B cell (primary cell): ENCODE measurements at regions of chr4 and their contacts with region 1.

Region 1: GRCh38 chr4:26325191-26325590 is 4.4 kb downstream of the RBPJ start:
- DNase-seq: peak; percentile 47
- ATAC-seq: no peak
- H3K4me3 ChIP-seq: no peak overlapping the region
- H3K4me3 Mint-ChIP-seq: no peak overlapping the region
- H3K27ac ChIP-seq: no peak overlapping the region
- H3K27ac Mint-ChIP-seq: no peak overlapping the region
- H3K4me1 ChIP-seq: peaks cover 13 to 14% of the 10 kb centered on the region in 2 donors
- H3K4me1 Mint-ChIP-seq: peaks cover 33% of the 10 kb centered on the region
- H3K27me3 ChIP-seq: no peaks in the 10 kb centered on the region
- H3K27me3 Mint-ChIP-seq: no peaks in the 10 kb centered on the region
- CTCF ChIP-seq: peak; percentile 24

Region 2: DNA sequence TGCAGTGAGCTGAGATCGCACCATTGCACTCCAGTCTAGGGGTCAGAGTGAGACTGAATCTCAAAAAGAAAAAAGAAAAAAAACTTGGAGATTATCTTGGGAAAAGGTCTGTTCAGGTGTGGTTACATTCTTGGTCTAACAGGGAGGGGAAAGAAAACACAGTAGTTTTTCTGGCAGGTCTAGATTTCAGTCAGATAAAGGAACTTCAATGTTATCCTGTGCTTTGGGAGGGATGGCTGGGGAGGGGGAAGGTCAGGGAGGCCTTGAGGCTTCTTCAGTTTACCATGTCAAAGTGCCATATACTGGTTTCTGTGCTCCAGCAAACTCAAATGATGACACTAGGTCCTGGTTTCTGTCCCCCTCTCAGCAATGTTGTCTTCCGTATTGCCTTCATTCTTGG is 718.5 kb before region 1 on chr4:
- CTCF ChIA-PET with region 1: no interaction called
- POLR2A ChIA-PET with region 1: no interaction called
- intact Hi-C with region 1: no loop called
- DNase-seq: no peak
- ATAC-seq: no peak
- H3K4me3 ChIP-seq: no peak overlapping the region
- H3K4me3 Mint-ChIP-seq: no peak overlapping the region
- H3K27ac ChIP-seq: no peak overlapping the region
- H3K27ac Mint-ChIP-seq: no peak overlapping the region
- H3K4me1 ChIP-seq: no peaks in the 10 kb centered on the region
- H3K4me1 Mint-ChIP-seq: no peaks in the 10 kb centered on the region
- H3K27me3 ChIP-seq: no peaks in the 10 kb centered on the region
- H3K27me3 Mint-ChIP-seq: peaks cover 4% of the 10 kb centered on the region
- CTCF ChIP-seq: no peak

Region 3: GRCh38 chr4:25993395-25994185 is 331.6 kb before region 1 on chr4:
- CTCF ChIA-PET with region 1: interaction called, 18 read pairs
- POLR2A ChIA-PET with region 1: no interaction called
- intact Hi-C with region 1: loop called (anchors 2 kb)
- DNase-seq: peak; percentile 33
- ATAC-seq: peak; percentile 39
- H3K4me3 ChIP-seq: no peak overlapping the region
- H3K4me3 Mint-ChIP-seq: no peak overlapping the region
- H3K27ac ChIP-seq: no peak overlapping the region
- H3K27ac Mint-ChIP-seq: no peak overlapping the region
- H3K4me1 ChIP-seq: peaks cover 0 to 5% of the 10 kb centered on the region in 2 donors
- H3K4me1 Mint-ChIP-seq: peaks cover 8% of the 10 kb centered on the region
- H3K27me3 ChIP-seq: peaks cover 0 to 2% (median 0%) of the 10 kb centered on the region in 4 experiments
- H3K27me3 Mint-ChIP-seq: peaks cover 5% of the 10 kb centered on the region
- CTCF ChIP-seq: peak; percentile 31

Region 4: GRCh38 chr4:26028793-26029567 is 296.2 kb before region 1 on chr4:
- CTCF ChIA-PET with region 1: interaction called, 13 read pairs
- POLR2A ChIA-PET with region 1: no interaction called
- intact Hi-C with region 1: loop called (anchors 1 kb)
- DNase-seq: peak; percentile 64
- ATAC-seq: peak; percentile 87
- H3K4me3 ChIP-seq: no peak overlapping the region
- H3K4me3 Mint-ChIP-seq: no peak overlapping the region
- H3K27ac ChIP-seq: no peak overlapping the region
- H3K27ac Mint-ChIP-seq: no peak overlapping the region
- H3K4me1 ChIP-seq: peaks cover 5 to 8% of the 10 kb centered on the region in 2 donors
- H3K4me1 Mint-ChIP-seq: peaks cover 6% of the 10 kb centered on the region
- H3K27me3 ChIP-seq: peaks cover 0 to 17% (median 3%) of the 10 kb centered on the region in 4 experiments
- H3K27me3 Mint-ChIP-seq: peaks cover 18% of the 10 kb centered on the region
- CTCF ChIP-seq: peak; percentile 69

Region 5: DNA sequence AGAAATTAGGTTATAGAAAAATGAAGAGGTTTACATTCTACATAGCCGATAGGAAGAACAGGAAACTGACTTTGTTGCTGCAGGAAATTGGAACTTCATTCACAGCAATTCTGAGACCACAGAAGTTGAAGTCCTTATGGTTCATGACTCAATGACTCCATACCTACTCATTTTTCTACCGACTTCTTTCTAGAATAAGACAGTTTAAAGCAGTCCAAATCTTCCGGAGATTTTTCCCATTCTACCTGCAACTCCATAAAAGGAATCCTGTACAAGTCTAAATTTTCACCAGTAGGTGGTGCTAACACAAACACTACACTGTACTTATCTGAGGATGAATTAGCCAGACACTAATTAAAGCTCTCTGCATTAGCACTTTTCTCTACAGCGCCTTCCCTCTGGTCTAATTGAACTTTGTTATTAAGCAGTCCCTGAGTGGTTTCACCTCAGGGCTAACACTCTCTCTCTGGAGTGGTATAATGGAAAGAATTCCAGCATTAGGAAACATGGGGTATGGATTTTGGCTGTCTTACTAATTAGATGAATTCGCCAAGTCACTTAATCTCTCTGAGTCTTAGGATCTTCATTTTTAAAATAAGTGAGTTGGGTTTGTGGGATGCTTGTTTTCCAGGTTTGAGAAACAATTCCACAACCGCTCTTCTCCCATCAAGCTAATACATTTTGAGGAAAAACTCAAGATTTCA is 243.2 kb before region 1 on chr4:
- CTCF ChIA-PET with region 1: interaction called, 22 read pairs
- POLR2A ChIA-PET with region 1: no interaction called
- intact Hi-C with region 1: loop called (anchors 1 kb)
- DNase-seq: peak; percentile 56
- ATAC-seq: peak; percentile 41
- H3K4me3 ChIP-seq: no peak overlapping the region
- H3K4me3 Mint-ChIP-seq: no peak overlapping the region
- H3K27ac ChIP-seq: no peak overlapping the region
- H3K27ac Mint-ChIP-seq: no peak overlapping the region
- H3K4me1 ChIP-seq: no peaks in the 10 kb centered on the region
- H3K4me1 Mint-ChIP-seq: peaks cover 8% of the 10 kb centered on the region
- H3K27me3 ChIP-seq: peaks cover 0 to 10% (median 0%) of the 10 kb centered on the region in 4 experiments
- H3K27me3 Mint-ChIP-seq: peaks cover 5% of the 10 kb centered on the region
- CTCF ChIP-seq: peak; percentile 78

Region 6: GRCh38 chr4:26369581-26369980 is 44.4 kb after region 1 on chr4:
- CTCF ChIA-PET with region 1: no interaction called
- POLR2A ChIA-PET with region 1: no interaction called
- intact Hi-C with region 1: no loop called
- DNase-seq: no peak
- ATAC-seq: no peak
- H3K4me3 ChIP-seq: no peak overlapping the region
- H3K4me3 Mint-ChIP-seq: no peak overlapping the region
- H3K27ac ChIP-seq: no peak overlapping the region
- H3K27ac Mint-ChIP-seq: no peak overlapping the region
- H3K4me1 ChIP-seq: peaks cover 11 to 12% of the 10 kb centered on the region in 2 donors
- H3K4me1 Mint-ChIP-seq: peaks cover 19% of the 10 kb centered on the region
- H3K27me3 ChIP-seq: no peaks in the 10 kb centered on the region
- H3K27me3 Mint-ChIP-seq: no peaks in the 10 kb centered on the region
- CTCF ChIP-seq: no peak

Region 7: DNA sequence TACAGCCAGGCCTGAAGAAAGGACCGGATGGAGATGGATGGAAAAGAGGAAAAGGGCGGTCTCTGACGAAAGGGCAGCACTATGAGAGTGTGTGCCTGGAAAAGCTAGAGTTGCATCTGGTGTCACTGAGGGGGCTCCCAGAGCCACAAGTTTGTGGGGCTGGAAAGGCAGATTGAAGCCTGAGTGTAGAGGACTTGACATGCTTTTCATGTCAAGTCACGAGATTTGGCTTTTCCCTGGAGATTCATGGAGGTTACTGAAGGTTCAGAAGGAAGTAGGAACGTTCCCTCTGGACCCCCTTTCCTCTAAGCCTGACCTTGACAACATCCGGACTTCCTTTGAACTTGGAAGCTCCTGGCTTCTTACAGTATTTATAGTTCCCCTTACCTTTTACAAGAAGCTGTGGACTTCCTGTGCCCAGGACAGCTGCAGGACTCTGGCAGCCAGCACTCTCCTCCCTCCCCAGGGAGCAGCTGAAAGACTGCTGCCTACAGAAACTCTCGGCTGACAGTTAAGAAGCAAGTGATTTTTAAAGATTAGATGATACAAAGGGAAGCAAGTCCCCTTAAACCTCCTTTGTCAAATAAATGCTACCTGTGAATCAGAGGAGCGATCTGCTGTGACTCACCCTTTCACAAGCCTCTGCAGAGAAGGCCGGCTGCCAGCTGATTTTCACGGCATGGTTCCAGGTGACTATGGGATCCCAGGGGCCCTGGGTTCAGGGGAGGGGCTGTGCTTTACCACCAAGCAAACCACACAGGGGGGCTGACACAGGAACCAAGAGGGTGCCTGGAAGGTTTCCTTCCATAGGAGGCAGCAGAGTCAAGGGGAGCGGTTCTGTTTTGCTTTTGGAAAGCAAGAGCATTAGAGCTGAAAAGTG is 462.5 kb after region 1 on chr4:
- CTCF ChIA-PET with region 1: no interaction called
- POLR2A ChIA-PET with region 1: no interaction called
- intact Hi-C with region 1: no loop called
- DNase-seq: peak; percentile 53
- ATAC-seq: peak; percentile 44
- H3K4me3 ChIP-seq: no peak overlapping the region
- H3K4me3 Mint-ChIP-seq: peak overlapping the region; percentile 30
- H3K27ac ChIP-seq: no peak overlapping the region
- H3K27ac Mint-ChIP-seq: no peak overlapping the region
- H3K4me1 ChIP-seq: peaks cover 29 to 31% of the 10 kb centered on the region in 2 donors
- H3K4me1 Mint-ChIP-seq: peaks cover 33% of the 10 kb centered on the region
- H3K27me3 ChIP-seq: peaks cover 0 to 15% (median 6%) of the 10 kb centered on the region in 4 experiments
- H3K27me3 Mint-ChIP-seq: peaks cover 14% of the 10 kb centered on the region
- CTCF ChIP-seq: peak; percentile 35